Testis (tissue), 5 donors: ENCODE measurements at regions of chr10 and their contacts with region 1.

Region 1: DNA sequence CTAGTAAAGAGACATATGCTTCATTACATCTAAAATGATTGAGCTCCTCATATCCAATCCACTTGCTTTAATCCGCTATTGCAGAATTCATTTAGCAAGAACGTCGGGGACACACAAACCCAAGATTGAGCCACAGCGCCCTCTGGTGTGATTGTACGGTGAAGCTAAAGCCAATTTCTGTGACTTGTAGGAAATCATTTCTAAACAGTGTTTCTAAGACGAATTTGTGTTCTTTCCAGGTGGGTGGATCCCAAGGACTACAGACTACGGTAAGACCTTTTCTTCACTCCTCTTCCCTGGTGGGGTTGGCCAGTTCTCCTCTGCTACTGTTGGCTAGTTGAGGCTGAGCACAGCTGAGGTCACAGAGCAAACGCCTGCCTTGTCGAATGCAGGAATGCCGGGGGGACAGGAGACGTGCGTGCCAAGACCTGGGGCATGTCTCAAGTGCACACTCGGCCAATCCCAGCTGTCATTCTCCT is 5.2 kb downstream of the DMBT1 start:
- DNase-seq: peak; percentile 91
- H3K4me3 ChIP-seq: no peak overlapping the region
- H3K27ac ChIP-seq: no peak overlapping the region
- H3K4me1 ChIP-seq: no peaks in the 10 kb centered on the region
- H3K27me3 ChIP-seq: no peaks in the 10 kb centered on the region
- CTCF ChIP-seq: peak; percentile 71 to 79 (median 74)
- POLR2A ChIP-seq: no peak

Region 2: GRCh38 chr10:122298598-122299301 is 267.0 kb before region 1 on chr10:
- intact Hi-C with region 1: loop called (anchors 5 kb)
- DNase-seq: peak; percentile 80
- H3K4me3 ChIP-seq: no peak overlapping the region
- H3K27ac ChIP-seq: no peak overlapping the region
- H3K4me1 ChIP-seq: no peaks in the 10 kb centered on the region
- H3K27me3 ChIP-seq: no peaks in the 10 kb centered on the region
- CTCF ChIP-seq: peak; percentile 78 to 86 (median 79)
- POLR2A ChIP-seq: no peak